Activated T-helper 2 cell treated with anti-CD3 and anti-CD28 coated beads, Interferon-gamma antibody, Interleukin-2, Interleukin-4, amounts not matched to agents 10 μg/mL and 5 μg/mL and 100 μg/mL, durations not matched to agents 14 hours and 24 hours and 36 hours (primary cell): ENCODE measurements at regions of chr1 and their contacts with region 1.

Region 1: DNA sequence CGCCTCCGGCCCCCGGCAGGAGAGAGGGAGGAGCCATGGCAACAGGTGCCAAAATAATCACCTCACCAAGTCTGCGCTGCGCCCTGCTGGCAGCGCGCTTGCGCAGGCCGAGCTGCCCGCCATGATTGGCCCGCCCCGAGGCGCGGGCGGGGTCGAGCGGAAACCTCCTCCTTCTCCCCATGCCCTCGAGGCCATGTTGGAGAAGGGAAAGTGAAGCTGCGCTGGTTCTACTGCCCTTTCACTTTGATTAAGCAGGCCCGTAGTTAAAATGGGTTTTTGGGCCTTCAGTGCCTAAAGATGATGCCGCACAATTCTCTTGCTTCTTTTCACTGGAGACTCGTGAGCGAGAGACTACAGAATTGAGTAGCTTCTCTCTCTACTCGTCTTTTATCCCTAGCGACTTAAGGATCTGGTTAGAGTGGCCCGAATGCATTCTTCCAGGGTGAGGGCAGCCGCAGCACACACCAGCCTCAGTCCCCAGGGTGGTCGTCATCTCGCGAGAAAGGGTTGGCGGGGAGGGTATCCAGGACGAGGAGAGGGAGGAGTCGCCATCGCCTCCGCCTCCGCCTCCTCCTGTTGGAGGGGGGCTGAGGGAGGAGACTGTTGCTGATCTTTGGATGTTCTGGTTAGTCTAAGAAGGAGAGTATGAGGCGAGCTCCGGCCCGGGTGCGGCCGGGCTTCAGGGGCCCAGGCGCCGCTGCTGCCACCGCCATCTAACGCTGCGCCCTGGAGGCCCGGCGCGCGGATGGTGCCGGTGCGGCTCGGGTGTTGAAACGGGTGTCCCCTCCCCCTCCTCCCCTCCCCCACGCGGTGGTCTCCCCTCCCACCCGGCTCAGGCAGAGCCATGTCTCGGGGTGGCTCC is at the start of gene DCAF6:
- DNase-seq: peak; percentile 97
- H3K4me3 Mint-ChIP-seq: peak within 1 kb of the TSS; percentile 94
- H3K27ac Mint-ChIP-seq: peak within 1 kb of the TSS; percentile 99
- H3K4me1 Mint-ChIP-seq: peaks cover 35% of the 10 kb centered on the region
- H3K27me3 Mint-ChIP-seq: no peaks in the 10 kb centered on the region
- total RNA-seq, gene DCAF6: 29.6 and 33.1 TPM in 2 replicates

Region 2: GRCh38 chr1:167553136-167554027 is 382.9 kb before region 1 on chr1 and contains the start of gene CREG1:
- intact Hi-C with region 1: loop called (anchors 5 kb)
- DNase-seq: peak; percentile 86
- H3K4me3 Mint-ChIP-seq: peak within 1 kb of the TSS; percentile 86
- H3K27ac Mint-ChIP-seq: peak within 1 kb of the TSS; percentile 40
- H3K4me1 Mint-ChIP-seq: peaks cover 27% of the 10 kb centered on the region
- H3K27me3 Mint-ChIP-seq: peaks cover 8% of the 10 kb centered on the region
- total RNA-seq, gene CREG1: 13.8 and 15.6 TPM in 2 replicates

Region 3: DNA sequence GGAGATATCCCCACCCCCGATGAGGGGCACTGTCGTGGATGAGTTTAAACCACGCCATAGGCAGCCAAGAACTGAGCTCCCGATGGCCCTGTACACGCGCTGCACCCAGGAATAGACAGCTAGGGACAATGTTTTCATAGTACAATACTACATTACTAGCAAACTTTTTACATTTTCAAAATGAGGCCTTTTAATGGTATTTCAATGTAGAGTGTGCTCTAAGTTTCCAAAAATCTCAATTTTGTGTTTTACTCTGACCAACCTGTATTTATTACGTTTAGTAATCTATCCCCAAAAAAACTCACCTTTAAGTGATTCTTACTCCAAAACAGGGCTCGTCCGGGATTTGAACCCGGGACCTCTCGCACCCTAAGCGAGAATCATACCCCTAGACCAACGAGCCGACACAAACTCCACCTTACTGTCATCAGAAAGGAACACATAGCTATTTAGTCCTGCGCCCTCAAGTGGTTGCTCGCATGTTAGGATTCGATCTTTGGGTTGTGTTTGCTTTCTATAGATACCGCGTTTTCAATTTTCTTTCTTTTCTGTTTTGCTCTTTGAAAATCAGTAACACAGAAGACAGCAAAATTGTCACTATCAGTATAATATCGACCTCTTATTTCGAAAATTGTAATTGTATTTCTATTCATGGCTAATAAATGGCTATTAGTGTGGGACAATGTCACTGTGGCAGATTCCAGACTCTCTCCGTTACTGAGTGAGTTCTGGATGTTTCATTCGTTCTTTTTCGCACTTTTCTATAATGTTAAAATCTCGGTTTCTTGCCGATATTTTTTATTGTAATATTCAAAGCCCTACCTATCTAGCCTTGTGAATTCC is 220.9 kb before region 1 on chr1:
- intact Hi-C with region 1: loop called (anchors 1 kb)
- DNase-seq: peak; percentile 83
- H3K4me3 Mint-ChIP-seq: peak overlapping the region; percentile 87
- H3K27ac Mint-ChIP-seq: peak overlapping the region; percentile 87
- H3K4me1 Mint-ChIP-seq: peaks cover 29% of the 10 kb centered on the region
- H3K27me3 Mint-ChIP-seq: peaks cover 4% of the 10 kb centered on the region

Region 4: DNA sequence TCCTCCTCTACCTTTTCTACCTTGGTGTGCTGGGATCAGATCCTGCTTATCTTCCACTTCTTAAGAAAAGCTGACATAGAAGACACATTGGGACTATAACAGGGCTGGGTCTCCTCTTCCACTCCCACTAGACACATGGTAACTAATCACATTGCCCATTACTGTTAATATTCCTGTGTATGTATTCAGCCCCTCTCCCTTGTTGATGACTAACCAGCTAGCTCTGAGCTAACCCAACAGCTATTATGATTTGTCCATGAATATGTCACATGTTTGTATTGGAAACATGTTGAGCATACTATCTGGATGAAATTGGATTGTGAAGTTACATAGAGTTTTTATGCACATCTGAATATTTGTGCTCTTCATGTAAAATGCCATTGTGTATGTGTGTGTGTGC is 161.6 kb before region 1 on chr1:
- intact Hi-C with region 1: no loop called
- DNase-seq: no peak
- H3K4me3 Mint-ChIP-seq: no peak overlapping the region
- H3K27ac Mint-ChIP-seq: no peak overlapping the region
- H3K4me1 Mint-ChIP-seq: peaks cover 23% of the 10 kb centered on the region
- H3K27me3 Mint-ChIP-seq: no peaks in the 10 kb centered on the region

Region 5: DNA sequence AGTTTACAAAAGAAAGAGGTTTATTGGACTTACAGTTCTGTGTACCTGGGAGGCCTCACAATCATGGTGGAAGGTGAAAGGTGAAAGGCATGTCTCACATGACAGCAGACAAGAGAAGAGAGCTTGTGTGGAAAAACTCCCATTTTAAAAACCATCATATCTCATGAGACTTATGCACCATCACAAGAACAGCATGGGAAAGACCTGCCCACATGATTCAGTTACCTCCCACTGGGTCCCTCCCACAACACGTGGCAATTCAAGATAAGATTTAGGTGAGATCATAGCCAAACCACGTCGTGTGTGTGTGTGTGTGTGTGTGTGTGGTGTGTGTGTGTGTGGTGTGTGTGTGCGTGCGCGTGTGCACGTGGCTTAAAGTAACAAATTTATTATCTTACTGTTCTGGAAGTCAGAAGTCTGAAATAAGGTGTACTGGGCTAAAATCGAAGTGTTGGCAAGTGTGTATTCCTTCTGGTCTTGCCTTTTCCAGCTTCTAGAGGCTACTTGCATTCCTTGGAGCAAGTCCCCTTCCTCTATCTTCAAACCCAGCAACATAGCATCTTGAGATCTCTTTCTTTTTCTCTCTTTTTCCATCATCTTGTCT is 48.7 kb after region 1 on chr1:
- intact Hi-C with region 1: loop called (anchors 10 kb)
- DNase-seq: no peak
- H3K4me3 Mint-ChIP-seq: no peak overlapping the region
- H3K27ac Mint-ChIP-seq: no peak overlapping the region
- H3K4me1 Mint-ChIP-seq: peaks cover 13% of the 10 kb centered on the region
- H3K27me3 Mint-ChIP-seq: no peaks in the 10 kb centered on the region

Region 6: DNA sequence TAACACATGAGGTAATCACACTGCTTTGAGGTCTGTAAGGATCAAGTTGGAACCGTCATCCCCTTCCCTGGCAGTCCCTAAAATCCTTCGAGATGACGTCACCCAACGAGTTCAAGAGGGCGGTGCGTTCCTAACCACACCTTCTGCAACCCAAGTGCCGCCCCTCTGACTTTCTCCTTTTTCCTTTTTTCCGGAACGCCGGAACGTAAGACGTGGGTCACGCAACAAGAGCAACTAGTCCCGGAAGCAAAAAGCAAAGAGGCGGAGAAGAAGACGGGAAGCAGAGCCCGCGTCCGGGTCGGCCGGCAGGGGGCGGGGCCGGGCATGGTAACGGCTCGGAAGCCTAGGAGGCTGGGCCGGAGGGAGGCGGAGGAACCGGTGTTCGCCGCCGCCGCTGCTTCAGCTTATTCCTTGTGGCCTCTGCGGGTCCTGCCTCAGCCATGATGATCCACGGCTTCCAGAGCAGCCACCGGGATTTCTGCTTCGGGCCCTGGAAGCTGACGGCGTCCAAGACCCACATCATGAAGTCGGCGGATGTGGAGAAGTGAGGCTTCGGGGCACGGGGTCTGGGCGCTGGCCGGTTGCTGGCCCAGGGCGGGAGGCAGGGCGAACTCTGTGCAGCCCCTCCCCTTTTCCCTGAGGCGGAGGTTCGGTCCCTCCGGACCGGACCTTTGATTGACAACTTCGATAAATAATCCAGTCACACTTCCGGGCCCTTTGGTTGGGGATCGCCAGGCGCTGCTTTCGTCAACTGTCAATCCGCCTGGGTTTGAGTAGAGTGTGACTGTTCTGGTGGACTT is 242.5 kb after region 1 on chr1 and contains the start of gene TIPRL:
- intact Hi-C with region 1: loop called (anchors 1 kb)
- DNase-seq: peak; percentile 93
- H3K4me3 Mint-ChIP-seq: no peak within 1 kb of the TSS
- H3K27ac Mint-ChIP-seq: no peak within 1 kb of the TSS
- H3K4me1 Mint-ChIP-seq: peaks cover 8% of the 10 kb centered on the region
- H3K27me3 Mint-ChIP-seq: peaks cover 4% of the 10 kb centered on the region
- total RNA-seq, gene TIPRL: 59.9 and 63.4 TPM in 2 replicates